ENCODE measurements at regions of chr15 and their contacts with region 1.

Region 1: GRCh38 chr15:34514251-34514670 is 69.2 kb downstream of the GOLGA8B start:
- DNase-seq: no peak
- H3K4me3 Mint-ChIP-seq: peak overlapping the region; percentile 78
- H3K27ac Mint-ChIP-seq: no peak overlapping the region
- H3K4me1 Mint-ChIP-seq: peaks cover 17% of the 10 kb centered on the region
- H3K27me3 Mint-ChIP-seq: peaks cover 70% of the 10 kb centered on the region

Region 2: GRCh38 chr15:34496207-34496995 is 17.9 kb before region 1 on chr15:
- intact Hi-C with region 1: loop called (anchors 2 kb)
- DNase-seq: no peak
- H3K4me3 Mint-ChIP-seq: no peak overlapping the region
- H3K27ac Mint-ChIP-seq: no peak overlapping the region
- H3K4me1 Mint-ChIP-seq: peaks cover 5% of the 10 kb centered on the region
- H3K27me3 Mint-ChIP-seq: peaks cover 66% of the 10 kb centered on the region

Region 3: GRCh38 chr15:34621675-34622074 is 107.4 kb after region 1 on chr15:
- intact Hi-C with region 1: no loop called
- DNase-seq: no peak
- H3K4me3 Mint-ChIP-seq: no peak overlapping the region
- H3K27ac Mint-ChIP-seq: no peak overlapping the region
- H3K4me1 Mint-ChIP-seq: no peaks in the 10 kb centered on the region
- H3K27me3 Mint-ChIP-seq: peaks cover 26% of the 10 kb centered on the region

Measured in activated T-helper 1 cell treated with anti-CD3 and anti-CD28 coated beads, Interleukin-12 subunit alpha, Interleukin-12 subunit beta, Interleukin-2, Interleukin-4 antibody, amounts not matched to agents 30 ng/mL and 10 ng/mL and 1 ng/mL, durations not matched to agents 14 hours and 24 hours and 36 hours (primary cell).